Activated CD4-positive, alpha-beta memory T cell treated with anti-CD3 and anti-CD28 coated beads, Interleukin-2, amount 10 ng/mL, durations not matched to agents 7 days and 5 days (primary cell): ENCODE measurements at regions of chr1 and their contacts with region 1.

Region 1: GRCh38 chr1:245045087-245045881 is 109.5 kb upstream of the KIF26B start:
- DNase-seq: no peak
- H3K4me3 Mint-ChIP-seq: no peak overlapping the region
- H3K27ac Mint-ChIP-seq: no peak overlapping the region
- H3K4me1 Mint-ChIP-seq: peaks cover 6% of the 10 kb centered on the region
- H3K27me3 Mint-ChIP-seq: peaks cover 3% of the 10 kb centered on the region

Region 2: DNA sequence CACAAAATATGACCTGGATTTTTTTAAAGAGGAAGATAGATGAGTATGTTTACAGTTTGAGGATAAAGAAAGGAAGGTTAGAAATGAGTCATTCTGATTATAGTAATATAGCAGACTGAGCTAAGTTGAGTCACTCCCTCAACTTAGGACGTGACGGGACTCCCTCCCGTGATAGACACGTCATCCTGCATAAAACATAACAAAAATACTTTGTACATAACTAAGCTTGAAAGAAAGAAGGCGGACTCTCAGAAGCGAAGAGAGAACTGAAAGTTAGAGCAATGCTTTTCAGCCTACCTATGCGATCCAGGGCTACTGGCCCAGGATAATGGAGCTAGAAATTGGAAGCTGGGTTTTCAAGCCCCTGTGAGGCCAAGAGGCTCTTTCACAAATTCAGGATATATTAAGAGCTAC is 445.3 kb before region 1 on chr1:
- CTCF ChIA-PET with region 1: interaction called, 25 read pairs
- POLR2A ChIA-PET with region 1: no interaction called
- DNase-seq: peak; percentile 65
- H3K4me3 Mint-ChIP-seq: peak overlapping the region; percentile 62
- H3K27ac Mint-ChIP-seq: peak overlapping the region; percentile 79
- H3K4me1 Mint-ChIP-seq: peaks cover 19% of the 10 kb centered on the region
- H3K27me3 Mint-ChIP-seq: peaks cover 15% of the 10 kb centered on the region

Region 3: GRCh38 chr1:244821134-244821533 is 224.2 kb before region 1 on chr1:
- CTCF ChIA-PET with region 1: interaction called, 12 read pairs
- POLR2A ChIA-PET with region 1: no interaction called
- DNase-seq: no peak
- H3K4me3 Mint-ChIP-seq: no peak overlapping the region
- H3K27ac Mint-ChIP-seq: no peak overlapping the region
- H3K4me1 Mint-ChIP-seq: no peaks in the 10 kb centered on the region
- H3K27me3 Mint-ChIP-seq: peaks cover 7% of the 10 kb centered on the region

Region 4: DNA sequence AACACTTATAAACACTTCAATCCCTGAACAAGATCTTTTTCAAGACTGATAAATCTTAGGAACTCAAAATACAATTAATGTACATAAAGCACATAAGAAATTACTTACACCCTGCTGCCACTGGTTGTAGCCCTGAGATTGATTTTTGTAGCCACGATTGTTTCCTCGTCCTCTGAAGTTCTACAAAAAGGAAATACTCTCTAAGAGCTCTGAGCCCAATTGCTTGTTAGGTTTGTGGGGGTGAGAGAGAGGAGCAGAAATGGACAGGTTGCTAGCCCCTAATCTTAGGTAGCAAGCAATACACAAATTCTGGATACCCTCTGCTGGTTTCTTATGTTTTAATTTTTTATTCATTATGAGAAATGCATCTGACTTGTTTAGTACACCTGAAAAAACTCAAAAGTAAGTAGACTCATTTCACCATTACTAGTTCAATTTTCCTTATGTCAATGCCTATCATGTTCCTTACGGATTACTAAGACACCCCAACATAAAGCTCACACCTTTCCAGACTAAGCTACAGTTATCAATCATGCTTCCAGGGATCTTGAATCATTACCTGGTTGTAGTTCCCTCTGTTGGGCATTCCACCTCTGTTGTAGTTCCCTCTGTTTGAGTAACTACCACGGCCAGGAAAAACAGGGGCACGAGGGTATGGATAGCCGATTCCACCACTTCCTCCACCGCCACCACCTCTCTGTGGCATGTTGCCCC is 190.3 kb before region 1 on chr1:
- CTCF ChIA-PET with region 1: interaction called, 17 read pairs
- POLR2A ChIA-PET with region 1: interaction called, 4 read pairs
- DNase-seq: no peak
- H3K4me3 Mint-ChIP-seq: peak overlapping the region; percentile 37
- H3K27ac Mint-ChIP-seq: peak overlapping the region; percentile 70
- H3K4me1 Mint-ChIP-seq: peaks cover 80% of the 10 kb centered on the region
- H3K27me3 Mint-ChIP-seq: no peaks in the 10 kb centered on the region

Region 5: DNA sequence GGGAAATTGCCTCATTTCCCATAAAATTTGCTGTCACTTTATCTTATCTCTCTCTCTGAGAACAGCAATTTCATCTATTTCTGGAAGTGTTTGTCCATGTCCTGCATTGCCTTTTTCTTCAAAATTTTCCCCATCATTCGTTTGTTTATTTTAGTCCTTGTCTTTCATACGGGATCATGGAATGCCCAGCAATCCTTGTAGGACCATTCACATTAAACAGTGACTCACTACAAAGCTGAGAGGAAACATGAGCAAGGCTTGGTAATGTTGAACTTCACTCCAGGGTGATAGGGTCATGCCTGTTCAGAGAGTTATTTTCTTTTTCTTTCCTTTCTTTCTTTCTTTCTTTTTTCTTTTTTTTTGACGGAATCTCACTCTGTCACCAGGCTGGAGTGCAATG is 148.7 kb before region 1 on chr1:
- CTCF ChIA-PET with region 1: no interaction called
- POLR2A ChIA-PET with region 1: no interaction called
- DNase-seq: no peak
- H3K4me3 Mint-ChIP-seq: no peak overlapping the region
- H3K27ac Mint-ChIP-seq: no peak overlapping the region
- H3K4me1 Mint-ChIP-seq: no peaks in the 10 kb centered on the region
- H3K27me3 Mint-ChIP-seq: no peaks in the 10 kb centered on the region

Region 6: DNA sequence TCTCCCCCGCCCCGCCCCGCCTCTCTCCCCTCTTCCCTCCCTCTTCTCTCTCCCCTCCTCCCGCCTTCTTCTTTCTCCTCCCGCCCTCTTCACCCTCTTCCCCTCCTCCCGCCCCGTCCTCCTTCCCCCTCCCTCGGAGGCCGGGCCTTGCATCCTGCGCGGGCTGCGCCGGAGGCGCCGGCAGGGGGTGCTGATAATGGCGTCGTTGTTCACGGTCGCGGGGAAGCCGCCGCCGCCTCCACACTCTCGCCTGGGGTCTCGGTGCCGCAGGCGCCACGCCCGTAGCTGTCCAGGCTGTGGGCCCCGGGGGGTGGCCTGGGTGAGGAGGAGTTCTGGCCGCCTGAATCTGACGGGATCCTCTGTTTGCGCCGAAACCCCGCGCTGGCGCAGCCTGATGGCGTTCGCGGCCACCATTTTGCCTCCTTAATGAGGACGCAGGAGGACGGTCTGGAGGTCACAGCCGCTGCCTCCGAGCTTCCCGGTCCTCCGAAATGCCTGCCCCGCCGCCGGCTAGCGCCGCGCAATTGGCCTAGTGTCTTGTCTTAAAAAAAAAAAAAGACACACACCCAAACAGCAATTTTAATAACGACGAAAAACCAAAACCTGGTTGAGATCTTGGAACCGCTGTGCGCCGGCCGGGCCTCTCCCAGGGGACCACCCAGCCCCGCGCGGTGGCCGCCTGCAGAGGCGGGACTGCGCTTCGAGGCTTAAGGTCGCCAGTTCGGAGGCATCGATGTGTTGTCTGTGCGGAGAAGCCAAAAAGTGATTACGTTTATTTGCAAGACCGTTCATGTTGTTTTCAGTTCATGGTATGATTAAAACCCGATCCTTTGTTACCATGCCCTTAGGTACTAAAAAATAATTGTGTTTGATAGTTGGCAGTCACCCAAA is 74.4 kb before region 1 on chr1:
- CTCF ChIA-PET with region 1: interaction called, 17 read pairs
- POLR2A ChIA-PET with region 1: interaction called, 11 read pairs
- DNase-seq: peak; percentile 91
- H3K4me3 Mint-ChIP-seq: peak overlapping the region; percentile 86
- H3K27ac Mint-ChIP-seq: peak overlapping the region; percentile 95
- H3K4me1 Mint-ChIP-seq: peaks cover 22% of the 10 kb centered on the region
- H3K27me3 Mint-ChIP-seq: no peaks in the 10 kb centered on the region

Region 7: GRCh38 chr1:245056913-245057312 is 11.6 kb after region 1 on chr1:
- CTCF ChIA-PET with region 1: interaction called, 28 read pairs
- POLR2A ChIA-PET with region 1: interaction called, 5 read pairs
- DNase-seq: no peak
- H3K4me3 Mint-ChIP-seq: no peak overlapping the region
- H3K27ac Mint-ChIP-seq: no peak overlapping the region
- H3K4me1 Mint-ChIP-seq: peaks cover 7% of the 10 kb centered on the region
- H3K27me3 Mint-ChIP-seq: peaks cover 4% of the 10 kb centered on the region